Heart left ventricle (tissue), 16 donors: ENCODE measurements at regions of chr4 and their contacts with region 1.

Region 1: DNA sequence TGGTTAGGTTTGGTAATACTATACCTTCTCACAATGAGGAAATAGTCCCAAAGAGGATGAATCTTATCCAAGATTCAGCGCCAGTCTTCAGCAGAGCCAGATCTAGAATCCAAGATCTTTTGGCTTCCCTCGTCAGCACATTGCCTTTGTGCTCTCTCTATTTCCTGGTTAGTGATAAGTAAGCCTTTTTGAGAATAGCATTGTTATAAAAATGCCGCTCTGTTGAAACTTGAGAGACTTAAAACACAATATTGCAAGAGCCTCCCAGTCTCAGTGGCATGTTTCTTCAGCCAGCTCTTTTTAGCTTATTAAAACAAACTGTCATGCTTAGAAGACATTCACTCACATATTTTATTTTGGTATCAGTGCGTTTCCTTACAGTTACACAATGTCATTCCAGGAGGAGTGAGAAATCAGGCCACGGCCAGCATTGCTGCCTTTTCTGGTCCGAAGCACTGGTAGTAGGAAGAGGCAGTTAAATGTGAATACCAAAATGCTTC is 141.4 kb downstream of the KLHL8 start:
- DNase-seq: peak in 2 of 5 donors; percentile 50 to 59
- ATAC-seq: peak; percentile 58 to 79 (median 74)
- H3K4me3 ChIP-seq: peak overlapping the region in 7 of 12 donors; percentile 11 to 26 (median 13)
- H3K27ac ChIP-seq: peak overlapping the region; percentile 64 to 81 (median 76)
- H3K4me1 ChIP-seq: peaks cover 13 to 99% (median 78%) of the 10 kb centered on the region in 12 donors
- H3K27me3 ChIP-seq: no peaks in the 10 kb centered on the region
- CTCF ChIP-seq: no peak
- POLR2A ChIP-seq: no peak

Region 2: GRCh38 chr4:87038837-87039615 is 40.0 kb before region 1 on chr4:
- intact Hi-C with region 1: loop called in 1 of 10 experiments (anchors 5 kb)
- DNase-seq: peak in 4 of 5 donors; percentile 64 to 85 (median 76)
- ATAC-seq: peak; percentile 74 to 90 (median 80)
- H3K4me3 ChIP-seq: no peak overlapping the region
- H3K27ac ChIP-seq: peak overlapping the region; percentile 33 to 89 (median 78)
- H3K4me1 ChIP-seq: peaks cover 35 to 99% (median 89%) of the 10 kb centered on the region in 12 donors
- H3K27me3 ChIP-seq: no peaks in the 10 kb centered on the region
- CTCF ChIP-seq: no peak
- POLR2A ChIP-seq: no peak